MCF 10A (cell line): ENCODE measurements at regions of chr2 and their contacts with region 1.

Region 1: GRCh38 chr2:177263451-177264208 is 897 bp downstream of the NFE2L2 start:
- DNase-seq: peak; percentile 99
- H3K4me3 Mint-ChIP-seq: peak overlapping the region; percentile 89
- H3K27ac Mint-ChIP-seq: peak overlapping the region; percentile 90
- H3K4me1 Mint-ChIP-seq: peaks cover 28% of the 10 kb centered on the region
- H3K27me3 Mint-ChIP-seq: no peaks in the 10 kb centered on the region
- CTCF ChIP-seq: peak; percentile 84

Region 2: DNA sequence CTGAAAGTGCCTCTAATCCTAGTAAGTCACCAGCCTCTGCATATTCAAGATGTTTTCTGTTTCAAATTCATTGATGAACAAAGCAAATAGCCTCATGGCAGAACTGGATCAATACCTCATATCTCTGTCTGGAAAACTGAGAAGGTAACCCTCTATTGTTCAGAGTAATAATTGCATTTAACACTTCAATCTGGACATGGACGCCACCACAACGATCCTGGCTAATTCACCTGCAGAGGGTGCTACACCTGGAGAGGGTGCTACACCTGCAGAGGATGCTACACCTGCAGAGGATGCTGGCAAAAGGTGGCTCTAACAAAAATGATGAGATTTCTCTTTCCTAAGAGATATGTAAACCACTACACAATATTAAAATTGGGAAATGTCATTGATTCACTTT is 234.2 kb before region 1 on chr2:
- CTCF ChIA-PET with region 1: no interaction called
- POLR2A ChIA-PET with region 1: no interaction called
- intact Hi-C with region 1: no loop called
- DNase-seq: peak; percentile 32
- H3K4me3 Mint-ChIP-seq: no peak overlapping the region
- H3K27ac Mint-ChIP-seq: no peak overlapping the region
- H3K4me1 Mint-ChIP-seq: no peaks in the 10 kb centered on the region
- H3K27me3 Mint-ChIP-seq: peaks cover 71% of the 10 kb centered on the region
- CTCF ChIP-seq: no peak

Region 3: DNA sequence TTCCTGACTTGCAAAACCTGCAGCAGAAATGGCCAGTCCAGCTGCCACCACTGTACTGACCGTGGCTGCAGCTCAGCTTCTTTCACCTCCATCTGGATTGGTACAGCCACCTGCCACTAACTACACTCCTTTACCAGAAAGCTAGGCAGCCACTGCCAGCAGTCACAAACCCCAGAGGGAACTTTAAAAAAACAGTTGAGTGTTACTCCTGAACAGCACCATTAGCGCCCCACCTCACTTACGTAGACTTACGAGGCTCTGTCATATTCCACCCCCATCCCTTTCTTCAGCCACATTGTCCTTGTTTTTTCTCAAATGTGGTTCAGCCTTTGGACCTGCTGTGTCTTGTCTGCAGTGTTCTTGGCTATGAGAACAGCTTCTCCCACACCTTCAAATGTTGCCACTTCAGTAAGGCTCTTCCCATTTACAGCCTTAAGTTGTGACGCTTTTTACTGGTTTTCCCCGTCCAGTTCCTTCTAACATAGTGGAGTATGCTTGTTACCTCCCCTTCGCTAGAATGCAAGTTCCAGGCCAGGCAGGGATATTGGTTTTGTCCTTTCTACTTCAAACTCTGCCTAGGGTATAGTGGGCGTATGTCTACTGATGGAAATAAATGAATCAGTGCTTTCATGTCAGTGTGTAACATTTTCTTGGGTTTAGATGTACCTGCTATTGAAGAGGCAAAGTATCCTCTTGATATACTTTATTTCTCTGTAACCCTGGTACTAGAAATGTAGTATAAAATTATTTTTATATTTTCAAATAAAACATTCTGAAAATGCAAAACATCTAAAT is 34.0 kb before region 1 on chr2:
- CTCF ChIA-PET with region 1: interaction called, 6 read pairs
- POLR2A ChIA-PET with region 1: interaction called, 88 read pairs
- intact Hi-C with region 1: loop called (anchors 1 kb)
- DNase-seq: no peak
- H3K4me3 Mint-ChIP-seq: no peak overlapping the region
- H3K27ac Mint-ChIP-seq: peak overlapping the region; percentile 35
- H3K4me1 Mint-ChIP-seq: peaks cover 21% of the 10 kb centered on the region
- H3K27me3 Mint-ChIP-seq: no peaks in the 10 kb centered on the region
- CTCF ChIP-seq: no peak

Region 4: DNA sequence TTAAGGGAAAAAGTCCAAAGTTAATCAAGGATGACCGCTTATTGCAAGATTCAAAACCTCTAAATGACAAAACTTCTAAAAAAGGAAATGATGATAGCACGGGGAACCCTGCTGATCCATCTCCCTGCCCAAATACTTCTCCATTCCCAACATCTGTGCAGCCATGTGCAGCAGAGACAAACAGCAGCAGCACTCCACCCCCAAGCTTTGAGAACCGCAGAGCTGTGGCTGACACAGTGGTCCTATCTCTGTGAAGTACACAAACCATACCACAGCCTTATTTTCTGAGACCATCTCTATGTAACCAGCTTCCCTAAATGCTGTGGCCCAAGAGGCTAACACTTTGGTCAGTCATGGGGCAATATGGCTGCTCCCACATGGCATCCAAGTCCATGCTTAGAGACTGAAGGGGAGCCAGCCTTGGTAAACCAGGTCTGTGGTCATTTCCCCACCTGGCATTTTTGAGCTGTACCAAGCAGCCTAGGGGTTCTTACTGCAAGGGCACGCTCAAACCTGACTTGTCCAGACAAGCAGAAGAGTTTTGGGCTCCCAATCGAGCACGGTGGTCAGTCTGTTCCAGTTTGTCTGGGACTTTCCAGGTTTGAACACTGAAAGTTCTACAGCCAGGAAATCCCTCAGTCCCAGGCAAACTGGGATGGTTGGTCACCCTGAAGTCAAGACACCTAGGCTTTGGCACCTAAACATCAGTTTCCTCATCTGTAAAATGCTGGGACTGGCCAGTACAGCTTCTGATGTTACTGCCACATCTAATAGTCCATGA is 18.0 kb after region 1 on chr2:
- CTCF ChIA-PET with region 1: interaction called, 23 read pairs
- POLR2A ChIA-PET with region 1: interaction called, 117 read pairs
- intact Hi-C with region 1: no loop called
- DNase-seq: peak; percentile 76
- H3K4me3 Mint-ChIP-seq: no peak overlapping the region
- H3K27ac Mint-ChIP-seq: peak overlapping the region; percentile 54
- H3K4me1 Mint-ChIP-seq: peaks cover 10% of the 10 kb centered on the region
- H3K27me3 Mint-ChIP-seq: no peaks in the 10 kb centered on the region
- CTCF ChIP-seq: no peak

Region 5: GRCh38 chr2:177306550-177306949 is 42.9 kb after region 1 on chr2:
- CTCF ChIA-PET with region 1: interaction called, 17 read pairs
- POLR2A ChIA-PET with region 1: interaction called, 15 read pairs
- intact Hi-C with region 1: no loop called
- DNase-seq: peak; percentile 20
- H3K4me3 Mint-ChIP-seq: no peak overlapping the region
- H3K27ac Mint-ChIP-seq: no peak overlapping the region
- H3K4me1 Mint-ChIP-seq: no peaks in the 10 kb centered on the region
- H3K27me3 Mint-ChIP-seq: no peaks in the 10 kb centered on the region
- CTCF ChIP-seq: no peak

Region 6: DNA sequence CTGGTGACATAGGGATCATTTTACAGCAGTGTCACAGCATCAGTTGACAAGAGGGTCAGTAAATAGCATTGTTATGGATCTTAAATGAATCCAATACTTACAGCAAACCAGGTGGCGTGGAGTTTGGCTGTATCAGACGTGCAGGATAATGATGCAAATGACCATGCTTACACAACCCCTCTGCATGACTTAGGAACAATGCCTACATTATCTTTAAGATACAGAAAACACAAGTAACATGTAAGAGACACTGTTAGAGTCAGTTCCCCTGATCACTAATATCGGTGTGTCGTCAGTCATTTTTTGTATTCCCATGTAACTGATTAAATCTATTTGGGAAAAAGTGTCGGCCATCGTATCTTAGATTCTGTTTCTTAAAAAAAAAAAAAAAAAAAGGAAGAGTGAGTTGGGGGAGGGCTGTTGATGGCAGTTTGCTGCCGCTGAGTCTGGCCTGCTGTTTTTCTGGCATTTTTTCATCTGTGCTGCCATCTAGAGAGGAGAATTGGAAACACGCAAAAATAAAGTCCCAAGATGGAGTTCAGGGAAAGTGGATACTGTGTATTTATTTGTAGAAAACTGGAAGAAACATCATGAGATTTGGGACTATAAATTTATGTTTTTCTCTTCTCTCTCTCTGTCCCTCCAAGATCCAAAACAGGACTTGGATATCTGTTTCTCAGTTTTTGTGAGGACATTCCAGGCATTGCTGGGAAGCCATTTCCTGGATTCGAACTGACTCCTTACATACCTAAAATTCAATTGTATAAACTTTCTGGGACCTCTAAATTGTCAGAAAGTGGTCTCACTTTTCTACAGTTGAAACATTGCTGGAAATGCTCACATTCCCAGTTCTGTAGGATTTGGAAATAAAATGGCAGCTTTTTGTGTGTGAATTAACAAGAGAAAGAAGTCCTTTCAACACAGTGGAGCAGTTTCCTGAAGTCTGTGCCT is 68.7 kb after region 1 on chr2:
- CTCF ChIA-PET with region 1: interaction called, 33 read pairs
- POLR2A ChIA-PET with region 1: interaction called, 47 read pairs
- intact Hi-C with region 1: loop called (anchors 1 kb)
- DNase-seq: peak; percentile 73
- H3K4me3 Mint-ChIP-seq: no peak overlapping the region
- H3K27ac Mint-ChIP-seq: no peak overlapping the region
- H3K4me1 Mint-ChIP-seq: peaks cover 8% of the 10 kb centered on the region
- H3K27me3 Mint-ChIP-seq: no peaks in the 10 kb centered on the region
- CTCF ChIP-seq: peak; percentile 60

Region 7: DNA sequence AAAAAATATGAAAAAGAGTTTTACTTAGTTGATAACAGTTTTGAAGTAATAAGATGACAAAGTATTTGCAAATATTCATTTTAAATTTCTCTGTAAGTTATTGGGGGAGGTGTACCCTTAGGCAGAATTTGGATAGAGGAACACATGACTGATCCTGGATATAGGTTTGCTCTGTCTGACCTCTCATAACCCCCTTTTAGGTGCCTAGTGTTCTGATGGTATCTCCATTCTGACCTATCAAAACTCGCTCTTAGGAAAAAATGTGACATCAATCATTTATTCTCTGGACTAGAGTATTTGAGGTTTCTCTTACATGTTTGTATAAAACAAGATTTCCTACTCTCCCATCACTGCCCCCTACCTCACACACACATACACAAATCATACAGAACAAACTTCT is 112.0 kb after region 1 on chr2:
- CTCF ChIA-PET with region 1: no interaction called
- POLR2A ChIA-PET with region 1: no interaction called
- intact Hi-C with region 1: no loop called
- DNase-seq: no peak
- H3K4me3 Mint-ChIP-seq: no peak overlapping the region
- H3K27ac Mint-ChIP-seq: no peak overlapping the region
- H3K4me1 Mint-ChIP-seq: no peaks in the 10 kb centered on the region
- H3K27me3 Mint-ChIP-seq: no peaks in the 10 kb centered on the region
- CTCF ChIP-seq: no peak